GM13976 (cell line): ENCODE measurements at regions of chr1 and their contacts with region 1.

Region 1: GRCh38 chr1:19651141-19651737 is 7.1 kb downstream of the NBL1 start:
- DNase-seq: peak; percentile 88
- CTCF ChIP-seq: peak; percentile 75

Region 2: DNA sequence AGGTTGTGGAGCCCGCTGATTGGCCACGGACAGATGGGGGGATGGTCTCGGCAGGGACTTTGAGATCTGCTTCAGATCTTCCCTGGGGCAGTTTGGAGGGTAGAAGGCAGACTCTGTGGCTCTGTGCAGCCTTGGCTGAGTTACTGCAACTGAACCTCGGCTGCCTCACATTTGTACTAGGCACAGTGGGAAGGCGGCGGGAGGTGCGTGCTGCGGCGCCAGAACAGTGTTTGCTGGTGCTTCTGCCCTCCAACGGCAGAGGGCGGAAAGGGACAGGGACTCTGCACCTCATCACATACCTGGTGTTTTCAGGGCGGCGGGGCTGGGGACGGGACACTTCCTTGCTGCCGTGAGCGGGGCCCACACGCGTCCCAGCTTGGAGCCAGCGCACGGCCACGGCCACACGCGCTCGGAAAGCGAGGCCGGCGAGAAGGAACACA is 312.9 kb before region 1 on chr1:
- in situ Hi-C with region 1: loop called (anchors 10 kb)
- DNase-seq: no peak
- CTCF ChIP-seq: no peak

Region 3: GRCh38 chr1:19462781-19463503 is 188.3 kb before region 1 on chr1:
- in situ Hi-C with region 1: no loop called
- DNase-seq: peak; percentile 55
- CTCF ChIP-seq: no peak

Region 4: DNA sequence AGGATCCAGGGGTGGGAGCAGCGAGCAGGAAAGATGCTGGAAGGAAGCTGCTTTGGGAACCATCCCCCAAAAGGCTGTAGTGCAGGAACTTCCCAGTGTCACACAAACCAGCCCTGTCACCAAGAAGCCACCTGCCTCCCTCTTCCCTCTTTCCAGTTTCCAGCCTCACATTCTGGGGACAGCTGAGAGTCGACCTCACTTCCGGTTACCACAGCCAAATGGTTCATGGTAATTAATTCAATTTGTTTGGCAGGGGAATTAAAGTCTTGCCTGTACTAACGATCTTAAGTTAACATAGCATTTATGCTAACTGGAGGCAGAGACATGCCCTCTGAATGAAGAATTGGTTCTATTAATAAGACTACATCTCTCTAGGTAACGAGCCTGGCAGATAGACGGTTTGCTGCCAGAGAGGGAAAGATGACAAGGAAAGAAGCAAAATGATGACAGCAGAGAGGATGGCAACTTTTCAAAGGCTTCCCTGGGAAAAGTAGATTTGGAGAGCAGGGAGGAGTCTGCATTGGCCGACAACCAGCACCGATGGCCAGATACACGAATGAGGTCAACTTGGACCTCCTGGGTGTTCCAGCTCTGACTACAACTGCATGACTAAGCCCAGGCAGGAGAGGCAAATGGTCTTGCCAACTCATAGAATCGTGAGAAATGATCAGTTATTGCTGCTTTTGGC is 84.3 kb after region 1 on chr1:
- in situ Hi-C with region 1: no loop called
- DNase-seq: no peak
- CTCF ChIP-seq: no peak